Activated CD4-positive, alpha-beta T cell treated with anti-CD3 and anti-CD28 coated beads, Interleukin-2, amount 10 ng/mL, durations not matched to agents 7 days and 5 days (primary cell): ENCODE measurements at regions of chr1 and their contacts with region 1.

Region 1: GRCh38 chr1:234528074-234528865 is 49.3 kb upstream of the TARBP1 start:
- DNase-seq: no peak
- H3K4me3 Mint-ChIP-seq: no peak overlapping the region
- H3K27ac Mint-ChIP-seq: no peak overlapping the region
- H3K4me1 Mint-ChIP-seq: peaks cover 27% of the 10 kb centered on the region
- H3K27me3 Mint-ChIP-seq: peaks cover 18% of the 10 kb centered on the region

Region 2: GRCh38 chr1:234398849-234399381 is 129.4 kb before region 1 on chr1:
- CTCF ChIA-PET with region 1: no interaction called
- POLR2A ChIA-PET with region 1: no interaction called
- DNase-seq: no peak
- H3K4me3 Mint-ChIP-seq: peak overlapping the region; percentile 68
- H3K27ac Mint-ChIP-seq: peak overlapping the region; percentile 89
- H3K4me1 Mint-ChIP-seq: peaks cover 53% of the 10 kb centered on the region
- H3K27me3 Mint-ChIP-seq: no peaks in the 10 kb centered on the region

Region 3: DNA sequence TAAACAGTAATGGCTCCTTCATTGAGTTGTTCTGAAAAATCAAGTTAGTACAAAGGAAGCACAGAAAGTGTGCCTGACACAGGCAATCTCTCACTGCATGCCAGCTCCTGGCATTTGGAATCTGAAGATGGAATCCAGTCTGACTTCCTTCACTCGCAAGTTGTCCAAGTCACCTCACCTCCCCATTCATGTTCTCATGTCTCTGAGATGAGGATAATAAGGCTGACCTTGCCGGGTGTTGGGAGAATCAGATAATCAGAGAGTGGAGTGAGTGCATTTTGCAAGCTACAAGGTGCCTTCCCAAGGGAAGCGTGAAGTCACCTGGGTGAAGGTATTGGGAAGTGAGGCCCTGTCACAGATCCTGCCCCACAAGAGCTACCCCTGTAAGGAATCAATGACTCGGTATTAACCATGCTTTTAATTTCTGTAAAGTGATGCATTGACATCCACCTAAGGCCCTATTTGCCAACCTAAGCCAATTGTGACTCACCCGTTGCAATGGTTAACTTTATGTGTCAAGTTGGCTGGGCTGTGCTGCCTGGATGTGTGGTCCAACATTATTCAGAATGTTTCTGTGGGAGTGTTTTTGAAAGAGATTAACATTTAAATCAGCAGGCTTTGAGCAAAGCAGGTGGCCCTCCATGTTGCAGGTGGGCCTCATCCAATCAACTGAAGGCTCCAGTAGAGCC is 13.2 kb after region 1 on chr1:
- CTCF ChIA-PET with region 1: interaction called, 12 read pairs
- POLR2A ChIA-PET with region 1: interaction called, 3 read pairs
- DNase-seq: no peak
- H3K4me3 Mint-ChIP-seq: no peak overlapping the region
- H3K27ac Mint-ChIP-seq: no peak overlapping the region
- H3K4me1 Mint-ChIP-seq: peaks cover 31% of the 10 kb centered on the region
- H3K27me3 Mint-ChIP-seq: no peaks in the 10 kb centered on the region